GM23248 (cell line): ENCODE measurements at regions of chr11 and their contacts with region 1.

Region 1: GRCh38 chr11:36564376-36565030 is 3.3 kb upstream of the RAG1 start:
- DNase-seq: peak; percentile 81
- H3K4me3 ChIP-seq: peak overlapping the region; percentile 64
- H3K27ac ChIP-seq: no peak overlapping the region
- H3K4me1 ChIP-seq: peaks cover 3% of the 10 kb centered on the region; the same call in 1 of the 2 replicates
- H3K27me3 ChIP-seq: peaks cover 44% of the 10 kb centered on the region

Region 2: GRCh38 chr11:36622431-36623136 is 58.1 kb after region 1 on chr11:
- in situ Hi-C with region 1: no loop called
- DNase-seq: peak; percentile 12
- H3K4me3 ChIP-seq: no peak overlapping the region
- H3K27ac ChIP-seq: no peak overlapping the region
- H3K4me1 ChIP-seq: no peaks in the 10 kb centered on the region
- H3K27me3 ChIP-seq: no peaks in the 10 kb centered on the region

Region 3: DNA sequence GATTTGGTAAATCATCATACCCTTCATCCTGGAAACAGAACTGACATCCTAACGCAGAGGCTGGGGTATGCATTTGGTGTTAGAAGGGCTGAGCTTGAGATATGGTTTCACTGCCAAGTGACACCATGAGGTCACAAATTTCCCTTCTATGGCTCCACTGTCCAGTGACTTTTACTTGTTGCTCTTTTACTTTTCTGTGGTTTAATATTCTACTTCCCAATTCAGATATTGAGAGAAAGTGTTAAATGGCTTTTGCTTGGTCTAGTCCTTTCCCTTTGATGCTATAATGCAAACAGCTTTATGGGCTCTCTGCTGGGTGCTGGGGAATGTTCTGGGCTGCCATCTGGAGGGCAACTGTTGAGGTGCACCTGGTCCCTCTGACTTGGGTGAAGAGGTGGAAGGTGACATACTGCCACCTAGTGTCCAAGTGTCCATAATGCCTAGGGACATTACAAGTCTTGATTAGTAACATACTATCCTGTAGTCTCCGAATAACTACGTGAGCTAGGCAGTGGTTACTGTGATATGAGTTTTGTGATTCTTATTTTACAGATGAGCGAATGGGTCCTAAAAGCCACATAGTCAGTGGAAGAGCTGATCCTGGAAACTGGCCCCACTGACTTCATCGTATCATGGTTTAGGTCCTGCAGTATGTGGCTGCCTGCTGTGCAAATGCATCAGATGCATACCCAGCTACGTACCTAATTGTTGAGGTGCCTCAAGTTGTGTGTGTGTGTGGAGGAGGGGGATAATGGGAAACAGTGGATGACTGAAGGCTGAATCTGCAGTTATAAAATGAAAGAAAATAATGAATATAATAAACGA is 182.6 kb after region 1 on chr11:
- in situ Hi-C with region 1: loop called (anchors 5 kb)
- DNase-seq: peak; percentile 90
- H3K4me3 ChIP-seq: no peak overlapping the region
- H3K27ac ChIP-seq: no peak overlapping the region
- H3K4me1 ChIP-seq: no peaks in the 10 kb centered on the region; the same call in 1 of the 2 replicates
- H3K27me3 ChIP-seq: peaks cover 8% of the 10 kb centered on the region; the same call in 1 of the 2 replicates